ENCODE measurements at regions of chr11 and their contacts with region 1.

Region 1: GRCh38 chr11:35006389-35007128 is 90.1 kb downstream of the PDHX start:
- DNase-seq: no peak
- H3K4me3 ChIP-seq: no peak overlapping the region
- H3K27ac ChIP-seq: no peak overlapping the region
- H3K4me1 ChIP-seq: no peaks in the 10 kb centered on the region
- H3K27me3 ChIP-seq: no peaks in the 10 kb centered on the region
- CTCF ChIP-seq: no peak
- POLR2A ChIP-seq: no peak

Region 2: DNA sequence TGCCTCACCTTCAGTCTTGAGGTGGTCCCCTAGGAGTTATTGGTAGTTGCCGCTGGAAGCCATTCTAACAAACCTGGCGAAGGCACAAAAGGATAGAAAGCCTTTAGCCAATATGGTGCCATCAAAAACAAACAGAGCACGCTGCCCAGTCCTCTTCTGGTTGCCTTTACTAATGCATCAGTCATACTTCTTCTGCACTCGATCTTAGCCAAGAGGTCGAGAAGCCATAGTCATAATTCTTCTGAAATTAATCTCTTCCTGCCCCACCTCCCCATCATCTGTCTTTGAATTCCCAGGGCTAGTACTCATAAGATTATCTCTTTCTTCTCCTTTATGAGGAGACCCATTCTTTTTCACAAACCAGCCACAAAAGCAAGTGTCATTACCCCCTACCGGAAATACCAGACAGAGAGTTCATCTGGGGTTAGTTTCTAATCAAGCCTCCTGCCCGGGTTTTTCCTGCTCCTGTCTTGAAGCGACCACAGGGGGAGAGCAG is 407.1 kb before region 1 on chr11:
- intact Hi-C with region 1: loop called (anchors 10 kb)
- DNase-seq: no peak
- H3K4me3 ChIP-seq: no peak overlapping the region
- H3K27ac ChIP-seq: no peak overlapping the region
- H3K4me1 ChIP-seq: no peaks in the 10 kb centered on the region
- H3K27me3 ChIP-seq: no peaks in the 10 kb centered on the region
- CTCF ChIP-seq: no peak
- POLR2A ChIP-seq: no peak

Measured in breast epithelium (tissue), 4 donors.